MCF 10A (cell line): ENCODE measurements at regions of chr5 and their contacts with region 1.

Region 1: DNA sequence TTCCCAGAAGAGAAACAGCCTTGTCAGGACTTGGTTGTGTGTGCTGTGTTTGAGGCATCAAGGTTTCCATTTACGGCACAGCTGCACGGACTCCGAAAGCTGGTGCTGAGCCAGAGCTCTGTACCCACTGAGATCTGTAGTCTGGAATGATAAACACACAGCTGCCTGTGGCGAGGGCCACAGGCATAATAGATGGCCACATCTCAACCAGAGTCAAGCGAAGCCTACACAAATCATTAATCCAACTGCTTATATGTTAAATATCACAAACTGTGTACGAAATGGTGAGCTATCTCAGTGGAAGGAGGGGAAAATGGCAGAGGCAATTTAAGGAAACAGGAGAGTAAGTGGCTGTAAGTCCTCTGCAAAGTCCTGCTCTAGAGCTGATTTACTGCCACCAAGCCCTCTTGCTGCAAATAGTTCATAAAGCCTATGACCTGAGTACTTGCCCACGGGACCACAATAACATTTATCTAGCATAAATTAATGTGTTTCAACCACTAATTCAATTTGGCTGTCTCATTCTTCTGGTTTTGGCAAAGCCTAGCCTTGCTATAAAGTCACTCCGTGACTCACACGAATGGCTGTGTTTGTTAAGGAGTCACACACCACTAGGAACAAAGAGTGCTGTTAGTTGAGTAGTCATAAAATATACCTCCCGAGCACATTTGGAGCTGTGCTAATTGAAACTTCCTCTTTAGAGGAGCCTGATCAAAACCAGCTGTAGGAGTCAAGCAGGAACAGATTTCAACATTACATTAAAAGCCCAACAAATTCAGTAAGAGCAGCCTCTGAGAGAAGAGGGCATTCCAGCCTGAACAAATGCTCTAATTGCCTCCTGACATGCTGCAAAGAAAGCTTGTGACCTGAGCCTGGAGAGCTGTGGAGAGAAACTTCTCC is 738.6 kb upstream of the ZNF608 start:
- DNase-seq: peak; percentile 98
- H3K4me3 Mint-ChIP-seq: peak overlapping the region; percentile 64
- H3K27ac Mint-ChIP-seq: peak overlapping the region; percentile 84
- H3K4me1 Mint-ChIP-seq: peaks cover 51% of the 10 kb centered on the region
- H3K27me3 Mint-ChIP-seq: no peaks in the 10 kb centered on the region
- CTCF ChIP-seq: no peak

Region 2: GRCh38 chr5:125463466-125464092 is 21.4 kb before region 1 on chr5:
- CTCF ChIA-PET with region 1: interaction called, 6 read pairs
- POLR2A ChIA-PET with region 1: interaction called, 12 read pairs
- intact Hi-C with region 1: no loop called
- DNase-seq: no peak
- H3K4me3 Mint-ChIP-seq: no peak overlapping the region
- H3K27ac Mint-ChIP-seq: no peak overlapping the region
- H3K4me1 Mint-ChIP-seq: peaks cover 21% of the 10 kb centered on the region
- H3K27me3 Mint-ChIP-seq: no peaks in the 10 kb centered on the region
- CTCF ChIP-seq: no peak

Region 3: DNA sequence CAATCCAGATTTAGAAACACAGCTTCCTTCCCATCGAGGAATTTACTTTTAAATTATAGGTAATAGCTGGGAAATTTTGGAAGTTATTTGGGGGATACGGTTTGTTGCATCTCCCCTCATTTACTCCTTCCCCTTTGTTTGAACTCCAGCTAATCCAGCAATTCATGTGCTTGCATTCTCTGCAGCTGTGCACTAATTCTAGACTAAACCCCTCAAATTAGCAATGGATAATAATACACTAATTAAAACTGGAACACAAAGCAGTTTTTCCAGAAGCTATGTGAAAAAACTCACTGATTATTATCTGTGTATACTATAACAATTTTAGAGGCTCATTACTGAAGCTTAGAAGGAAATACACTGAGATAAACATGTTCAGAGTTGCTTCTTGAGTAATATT is 12.7 kb after region 1 on chr5:
- CTCF ChIA-PET with region 1: interaction called, 3 read pairs
- POLR2A ChIA-PET with region 1: interaction called, 20 read pairs
- intact Hi-C with region 1: no loop called
- DNase-seq: no peak
- H3K4me3 Mint-ChIP-seq: no peak overlapping the region
- H3K27ac Mint-ChIP-seq: peak overlapping the region; percentile 67
- H3K4me1 Mint-ChIP-seq: peaks cover 20% of the 10 kb centered on the region
- H3K27me3 Mint-ChIP-seq: no peaks in the 10 kb centered on the region
- CTCF ChIP-seq: no peak

Region 4: GRCh38 chr5:125559296-125559695 is 74.3 kb after region 1 on chr5:
- CTCF ChIA-PET with region 1: interaction called, 3 read pairs
- POLR2A ChIA-PET with region 1: interaction called, 11 read pairs
- intact Hi-C with region 1: no loop called
- DNase-seq: peak; percentile 88
- H3K4me3 Mint-ChIP-seq: peak overlapping the region; percentile 39
- H3K27ac Mint-ChIP-seq: peak overlapping the region; percentile 69
- H3K4me1 Mint-ChIP-seq: peaks cover 28% of the 10 kb centered on the region
- H3K27me3 Mint-ChIP-seq: no peaks in the 10 kb centered on the region
- CTCF ChIP-seq: no peak

Region 5: DNA sequence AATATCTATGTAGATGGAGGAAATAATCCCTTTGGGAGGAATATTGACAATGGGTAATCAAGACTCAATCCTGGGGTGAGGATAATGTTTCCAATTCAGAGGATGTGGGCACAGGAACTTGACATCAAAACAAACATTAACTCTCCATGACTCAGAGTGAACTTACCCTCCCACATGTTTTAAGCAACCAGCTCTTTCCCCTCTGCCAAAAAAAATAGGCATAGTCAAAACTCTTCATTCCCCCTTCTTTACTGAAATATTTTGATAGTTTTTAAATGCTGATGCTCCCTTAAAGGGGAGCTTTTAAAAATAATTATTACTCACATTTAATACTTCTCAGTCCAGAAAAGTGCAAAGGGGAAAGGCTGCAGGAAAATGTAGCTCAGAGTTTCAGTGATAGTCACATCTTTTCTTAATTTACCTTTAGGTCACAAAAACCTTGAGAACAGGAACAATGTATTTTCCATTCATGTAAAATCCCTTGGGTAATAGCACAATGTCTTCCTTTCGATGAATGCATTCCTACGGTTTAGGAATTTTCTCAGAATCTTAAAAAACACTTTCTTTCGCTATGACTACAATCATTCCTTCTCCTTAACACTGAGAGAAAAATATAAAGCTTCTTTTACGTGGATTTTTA is 639.8 kb after region 1 on chr5:
- CTCF ChIA-PET with region 1: no interaction called
- POLR2A ChIA-PET with region 1: interaction called, 4 read pairs
- intact Hi-C with region 1: loop called (anchors 10 kb)
- DNase-seq: peak; percentile 92
- H3K4me3 Mint-ChIP-seq: peak overlapping the region; percentile 30
- H3K27ac Mint-ChIP-seq: peak overlapping the region; percentile 71
- H3K4me1 Mint-ChIP-seq: peaks cover 46% of the 10 kb centered on the region
- H3K27me3 Mint-ChIP-seq: no peaks in the 10 kb centered on the region
- CTCF ChIP-seq: no peak

Region 6: GRCh38 chr5:126531543-126532120 is 1046.6 kb after region 1 on chr5:
- CTCF ChIA-PET with region 1: no interaction called
- POLR2A ChIA-PET with region 1: no interaction called
- intact Hi-C with region 1: loop called (anchors 10 kb)
- DNase-seq: no peak
- H3K4me3 Mint-ChIP-seq: no peak overlapping the region
- H3K27ac Mint-ChIP-seq: no peak overlapping the region
- H3K4me1 Mint-ChIP-seq: peaks cover 1% of the 10 kb centered on the region
- H3K27me3 Mint-ChIP-seq: no peaks in the 10 kb centered on the region
- CTCF ChIP-seq: no peak